K562 (cell line): ENCODE measurements at regions of chr10 and their contacts with region 1.

Region 1: DNA sequence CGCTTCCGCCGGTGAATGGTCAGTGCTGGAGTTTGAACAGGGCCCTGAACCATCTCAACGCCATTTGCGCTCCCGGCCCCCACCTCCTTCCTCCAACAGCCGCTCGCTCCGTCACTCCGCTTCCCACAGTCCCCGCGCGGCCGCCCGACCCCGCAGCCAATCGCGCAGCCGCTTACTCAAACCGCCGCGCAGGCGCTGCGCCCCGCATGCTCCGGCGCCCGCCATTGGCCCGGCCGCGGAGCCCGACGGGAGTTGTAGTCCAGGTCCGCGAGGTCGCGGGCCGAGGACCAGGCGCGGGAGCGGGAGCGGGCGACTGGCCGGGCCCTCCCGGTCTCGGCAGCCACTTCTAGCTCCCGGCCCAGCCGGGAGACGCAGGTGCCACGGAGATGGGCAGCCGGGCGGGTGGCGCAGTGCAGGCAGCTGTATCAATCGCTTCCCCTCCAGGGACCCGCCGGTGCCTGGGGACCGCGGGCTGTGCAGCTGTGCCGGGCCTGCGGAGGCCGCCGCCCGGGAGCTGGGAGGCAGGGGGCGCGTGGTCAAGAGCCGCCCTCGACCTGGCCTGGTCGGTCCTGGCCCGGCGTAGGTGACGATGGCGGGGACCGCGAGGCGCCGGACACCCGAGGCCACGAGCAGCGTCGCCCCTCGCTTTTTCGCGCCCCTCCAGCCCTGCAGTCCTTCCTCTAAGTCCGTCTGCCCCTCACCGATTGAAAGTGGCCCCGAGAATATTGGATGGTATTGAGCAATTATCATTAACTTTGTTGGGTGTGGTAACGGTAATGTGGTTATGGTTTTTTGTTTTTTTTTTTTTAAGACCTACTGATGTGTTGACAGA is at the start of gene WAPL:
- DNase-seq: peak; percentile 92 to 96 (median 94)
- ATAC-seq: peak; percentile 96
- H3K4me3 ChIP-seq: peak within 1 kb of the TSS; percentile 92
- H3K27ac ChIP-seq: peak within 1 kb of the TSS; percentile 88
- H3K4me1 ChIP-seq: peaks cover 8 to 10% of the 10 kb centered on the region in 2 experiments; a peak in 2 of 5 replicates
- H3K27me3 ChIP-seq: no peaks in the 10 kb centered on the region
- CTCF ChIP-seq: no peak
- EP300 ChIP-seq: no peak
- POLR2A ChIP-seq: peak; percentile 71
- RAD21 ChIP-seq: no peak
- polyA plus RNA-seq, gene WAPL: 14.3 to 21.9 TPM

Region 2: DNA sequence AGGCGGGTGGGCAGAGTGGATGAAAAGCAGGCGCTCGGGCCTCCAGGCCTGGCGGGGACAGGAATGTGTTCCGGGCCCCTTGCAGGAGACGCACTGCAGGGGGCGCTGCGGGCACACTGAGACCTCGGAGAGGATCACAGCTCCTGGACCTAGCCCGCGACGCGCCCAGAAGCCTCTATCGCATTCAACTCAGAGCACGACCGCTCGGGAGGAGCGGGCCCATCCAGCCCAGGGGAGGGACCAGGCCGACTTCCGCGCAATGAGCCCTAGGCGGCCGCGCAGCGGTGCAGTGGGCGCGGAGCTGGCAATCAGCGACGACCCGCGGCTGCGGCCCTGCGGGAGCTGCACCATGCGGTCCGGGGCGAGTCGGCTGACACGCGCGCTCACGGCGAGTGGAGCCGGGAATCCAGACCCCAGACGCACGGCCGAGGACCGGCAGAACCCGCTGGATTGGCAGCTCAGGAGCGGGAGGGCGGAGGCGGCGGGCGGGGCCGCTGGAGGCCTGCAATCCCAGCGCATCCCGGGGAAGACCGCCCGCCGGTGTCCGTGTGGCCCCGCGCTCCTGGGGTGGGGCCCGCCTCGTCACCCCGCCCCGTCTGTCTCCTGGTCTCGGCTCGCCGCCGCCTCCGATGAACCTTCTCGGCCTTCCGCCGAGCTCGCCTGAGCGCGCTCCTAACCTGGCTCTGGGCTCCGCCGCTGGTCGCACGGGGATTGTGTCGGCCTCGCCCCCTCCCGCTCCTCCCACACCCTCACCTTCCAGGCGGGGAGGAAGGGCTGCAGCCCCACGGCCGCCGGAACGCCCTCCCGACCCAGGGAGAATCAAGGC is 121.8 kb before region 1 on chr10:
- CTCF ChIA-PET with region 1: no interaction called
- POLR2A ChIA-PET with region 1: no interaction called
- in situ Hi-C with region 1: no loop called
- intact Hi-C with region 1: loop called (anchors 1 kb)
- DNase-seq: peak; percentile 77 to 92 (median 82)
- ATAC-seq: peak; percentile 99
- H3K4me3 ChIP-seq: peak overlapping the region; percentile 49
- H3K27ac ChIP-seq: no peak overlapping the region
- H3K4me1 ChIP-seq: peaks cover 0 to 21% of the 10 kb centered on the region in 2 experiments; a peak in 2 of 5 replicates
- H3K27me3 ChIP-seq: peaks cover 4 to 29% of the 10 kb centered on the region in 2 experiments; a peak in 3 of 5 replicates
- CTCF ChIP-seq: peak; percentile 81 to 84 (median 83)
- EP300 ChIP-seq: no peak
- POLR2A ChIP-seq: no peak
- RAD21 ChIP-seq: peak; percentile 59 to 80